ENCODE measurements at regions of chr10 and their contacts with region 1.

Region 1: GRCh38 chr10:91251430-91252056 is 31.1 kb downstream of the PCGF5 start:
- DNase-seq: peak; percentile 50 to 69 (median 66)
- H3K4me3 ChIP-seq: no peak overlapping the region
- H3K4me3 Mint-ChIP-seq: no peak overlapping the region
- H3K27ac ChIP-seq: no peak overlapping the region
- H3K27ac Mint-ChIP-seq: peak overlapping the region in 1 of 7 donors; percentile 10
- H3K4me1 ChIP-seq: peaks cover 22% of the 10 kb centered on the region
- H3K4me1 Mint-ChIP-seq: peaks cover 5 to 9% (median 6%) of the 10 kb centered on the region in 4 donors
- H3K27me3 ChIP-seq: no peaks in the 10 kb centered on the region
- H3K27me3 Mint-ChIP-seq: no peaks in the 10 kb centered on the region

Region 2: GRCh38 chr10:90885176-90885575 is 366.4 kb before region 1 on chr10:
- CTCF ChIA-PET with region 1: interaction called, 8 read pairs
- POLR2A ChIA-PET with region 1: no interaction called
- intact Hi-C with region 1: loop called (anchors 1 kb)
- DNase-seq: no peak
- H3K4me3 ChIP-seq: no peak overlapping the region
- H3K4me3 Mint-ChIP-seq: no peak overlapping the region
- H3K27ac ChIP-seq: no peak overlapping the region
- H3K27ac Mint-ChIP-seq: no peak overlapping the region
- H3K4me1 ChIP-seq: no peaks in the 10 kb centered on the region
- H3K4me1 Mint-ChIP-seq: peaks cover under 1 to 6% (median 4%) of the 10 kb centered on the region in 4 donors
- H3K27me3 ChIP-seq: no peaks in the 10 kb centered on the region
- H3K27me3 Mint-ChIP-seq: no peaks in the 10 kb centered on the region

Region 3: DNA sequence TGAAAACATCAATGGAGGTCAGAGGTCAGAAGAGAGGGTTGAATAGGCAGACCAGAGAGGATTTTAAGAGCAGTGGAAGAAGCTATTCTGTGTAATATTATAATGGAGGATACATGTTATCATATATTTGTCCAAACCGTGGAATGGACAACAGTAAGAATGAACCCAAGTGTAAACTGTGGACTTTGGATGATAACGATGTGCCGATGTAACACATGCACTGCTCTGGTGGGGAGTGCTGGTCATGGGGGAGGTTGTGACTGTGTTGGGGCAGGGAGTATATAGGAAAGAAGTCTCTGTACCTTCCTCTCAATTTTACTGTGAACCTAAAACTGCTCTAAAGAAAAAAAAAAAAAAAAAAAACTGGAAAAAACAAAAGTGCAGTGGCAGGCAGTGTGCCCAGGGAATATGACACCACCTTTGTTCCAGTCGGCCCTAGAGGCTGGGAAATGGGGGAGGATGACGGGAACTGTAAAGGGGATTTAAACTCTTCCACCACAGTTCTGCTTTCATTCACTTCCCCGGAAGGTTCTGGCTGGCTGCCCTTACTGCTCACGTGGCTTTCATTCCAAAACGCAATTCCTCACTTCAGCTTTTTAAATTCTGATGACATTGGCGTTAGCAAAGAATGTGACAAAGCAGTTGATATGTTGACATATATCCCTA is 216.9 kb before region 1 on chr10:
- CTCF ChIA-PET with region 1: interaction called, 13 read pairs
- POLR2A ChIA-PET with region 1: interaction called, 3 read pairs
- intact Hi-C with region 1: no loop called
- DNase-seq: no peak
- H3K4me3 ChIP-seq: no peak overlapping the region
- H3K4me3 Mint-ChIP-seq: peak overlapping the region in 6 of 8 donors; percentile 40 to 81 (median 69)
- H3K27ac ChIP-seq: peak overlapping the region; percentile 13
- H3K27ac Mint-ChIP-seq: peak overlapping the region; percentile 64 to 96 (median 89)
- H3K4me1 ChIP-seq: peaks cover 25% of the 10 kb centered on the region
- H3K4me1 Mint-ChIP-seq: peaks cover 16 to 31% (median 20%) of the 10 kb centered on the region in 4 donors
- H3K27me3 ChIP-seq: no peaks in the 10 kb centered on the region
- H3K27me3 Mint-ChIP-seq: no peaks in the 10 kb centered on the region

Region 4: GRCh38 chr10:91071786-91072185 is 179.8 kb before region 1 on chr10:
- CTCF ChIA-PET with region 1: no interaction called
- POLR2A ChIA-PET with region 1: no interaction called
- intact Hi-C with region 1: no loop called
- DNase-seq: no peak
- H3K4me3 ChIP-seq: no peak overlapping the region
- H3K4me3 Mint-ChIP-seq: no peak overlapping the region
- H3K27ac ChIP-seq: no peak overlapping the region
- H3K27ac Mint-ChIP-seq: no peak overlapping the region
- H3K4me1 ChIP-seq: no peaks in the 10 kb centered on the region
- H3K4me1 Mint-ChIP-seq: no peaks in the 10 kb centered on the region
- H3K27me3 ChIP-seq: no peaks in the 10 kb centered on the region
- H3K27me3 Mint-ChIP-seq: peaks cover 5 to 6% of the 10 kb centered on the region in 2 donors

Region 5: DNA sequence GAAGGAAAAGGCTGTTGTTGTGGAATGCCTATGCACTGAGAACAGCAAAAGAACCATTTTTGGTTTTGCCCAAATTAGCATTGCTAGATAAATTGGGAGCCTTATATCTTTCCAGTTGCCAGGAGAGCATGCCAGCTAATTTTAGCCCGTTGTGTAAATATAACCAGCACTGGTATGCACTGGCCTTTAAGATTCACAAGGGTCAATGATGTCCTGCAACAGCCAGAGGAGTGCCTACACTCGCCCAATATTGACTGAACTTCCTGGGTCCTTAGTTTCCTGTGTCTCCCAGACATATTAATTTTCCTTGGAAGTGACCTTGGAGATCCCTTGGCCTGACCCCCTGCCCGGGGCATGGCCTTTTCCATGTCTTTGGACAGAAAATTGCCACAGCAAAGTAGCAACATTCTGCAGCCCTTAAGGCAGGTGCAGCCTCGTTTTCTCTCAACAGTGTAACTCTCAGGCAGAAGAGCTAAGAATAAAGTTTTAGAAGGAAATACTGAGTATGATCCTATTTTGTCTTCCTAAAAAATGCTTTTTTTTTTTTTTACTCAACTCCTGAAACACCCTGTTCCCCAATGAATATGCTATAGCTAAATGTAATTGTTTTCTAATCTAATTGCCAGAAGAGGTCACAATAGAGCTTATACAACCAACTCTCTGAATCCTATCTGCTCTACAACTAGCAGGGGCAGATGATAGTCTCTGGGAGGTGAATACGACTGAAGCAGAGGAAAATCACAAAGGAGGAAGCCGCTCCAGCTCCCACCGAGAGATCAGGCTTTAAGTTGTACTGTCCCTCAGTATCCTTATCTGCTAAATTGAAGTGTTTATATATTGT is 163.0 kb before region 1 on chr10:
- CTCF ChIA-PET with region 1: interaction called, 156 read pairs
- POLR2A ChIA-PET with region 1: no interaction called
- intact Hi-C with region 1: loop called (anchors 1 kb)
- DNase-seq: peak in 4 of 5 donors; percentile 22 to 29 (median 24)
- H3K4me3 ChIP-seq: no peak overlapping the region
- H3K4me3 Mint-ChIP-seq: no peak overlapping the region
- H3K27ac ChIP-seq: no peak overlapping the region
- H3K27ac Mint-ChIP-seq: peak overlapping the region in 1 of 7 donors; percentile 36
- H3K4me1 ChIP-seq: no peaks in the 10 kb centered on the region
- H3K4me1 Mint-ChIP-seq: no peaks in the 10 kb centered on the region
- H3K27me3 ChIP-seq: no peaks in the 10 kb centered on the region
- H3K27me3 Mint-ChIP-seq: no peaks in the 10 kb centered on the region